Breast epithelium (tissue), 4 donors: ENCODE measurements at regions of chrX and their contacts with region 1.

Region 1: GRCh38 chrX:51281758-51282318 is 50.8 kb upstream of the NUDT10 start:
- DNase-seq: no peak
- H3K4me3 ChIP-seq: no peak overlapping the region
- H3K27ac ChIP-seq: no peak overlapping the region
- H3K4me1 ChIP-seq: no peaks in the 10 kb centered on the region
- H3K27me3 ChIP-seq: peaks cover 0 to 17% of the 10 kb centered on the region in 2 donors
- CTCF ChIP-seq: no peak
- POLR2A ChIP-seq: no peak

Region 2: GRCh38 chrX:50920132-50920531 is 361.7 kb before region 1 on chrX:
- intact Hi-C with region 1: no loop called
- DNase-seq: no peak
- H3K4me3 ChIP-seq: no peak overlapping the region
- H3K27ac ChIP-seq: no peak overlapping the region
- H3K4me1 ChIP-seq: no peaks in the 10 kb centered on the region
- H3K27me3 ChIP-seq: peaks cover 0 to 16% of the 10 kb centered on the region in 2 donors
- CTCF ChIP-seq: no peak
- POLR2A ChIP-seq: no peak

Region 3: GRCh38 chrX:51395810-51396728 is 114.2 kb after region 1 on chrX:
- intact Hi-C with region 1: loop called (anchors 5 kb)
- DNase-seq: peak in 1 of 2 donors; percentile 46
- H3K4me3 ChIP-seq: peak overlapping the region; percentile 28 to 70 (median 52)
- H3K27ac ChIP-seq: peak overlapping the region in 1 of 2 donors; percentile 38
- H3K4me1 ChIP-seq: no peaks in the 10 kb centered on the region
- H3K27me3 ChIP-seq: peaks cover 0 to 51% of the 10 kb centered on the region in 2 donors
- CTCF ChIP-seq: peak in 1 of 3 donors; percentile 11
- POLR2A ChIP-seq: no peak